ENCODE measurements at regions of chr6 and their contacts with region 1.

Region 1: DNA sequence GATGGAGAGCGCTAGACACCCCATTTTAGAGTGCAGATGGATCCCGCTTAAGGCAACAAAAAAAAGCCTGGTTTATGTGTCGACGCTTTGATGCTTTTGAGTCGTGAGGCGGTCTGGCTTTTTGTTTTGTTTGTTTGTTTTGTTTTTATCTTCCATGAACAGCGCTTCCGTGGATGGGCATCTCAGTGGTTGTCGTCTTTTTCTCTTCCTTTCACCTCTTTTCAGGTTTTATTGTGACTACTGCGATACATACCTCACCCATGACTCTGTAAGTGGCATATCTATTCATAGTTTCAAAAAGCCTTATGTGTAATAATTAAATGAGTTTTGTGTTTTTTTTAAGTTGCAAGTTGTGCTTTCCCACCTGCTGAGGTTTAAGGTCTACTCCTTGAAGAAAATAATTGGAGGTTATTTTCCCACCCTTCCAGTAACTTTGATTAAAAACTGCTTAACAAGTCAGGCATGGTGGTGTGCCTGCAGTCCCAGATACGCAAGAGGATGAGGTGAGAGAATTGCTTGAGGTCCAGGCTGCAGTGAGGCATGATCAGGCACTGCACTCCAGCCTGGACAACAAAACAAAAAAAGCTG is 476 bp downstream of the SNRPC start:
- DNase-seq: no peak
- ATAC-seq: no peak
- H3K4me3 Mint-ChIP-seq: no peak overlapping the region
- H3K27ac Mint-ChIP-seq: no peak overlapping the region
- H3K4me1 Mint-ChIP-seq: peaks cover 16% of the 10 kb centered on the region
- H3K27me3 Mint-ChIP-seq: no peaks in the 10 kb centered on the region
- CTCF ChIP-seq: no peak

Region 2: GRCh38 chr6:34236131-34236996 is 521.4 kb before region 1 on chr6 and contains the start of gene HMGA1:
- CTCF ChIA-PET with region 1: no interaction called
- POLR2A ChIA-PET with region 1: interaction called, 3 read pairs
- intact Hi-C with region 1: loop called (anchors 2 kb)
- DNase-seq: peak; percentile 90
- ATAC-seq: peak; percentile 77
- H3K4me3 Mint-ChIP-seq: peak within 1 kb of the TSS; percentile 89
- H3K27ac Mint-ChIP-seq: peak within 1 kb of the TSS; percentile 95
- H3K4me1 Mint-ChIP-seq: peaks cover 36% of the 10 kb centered on the region
- H3K27me3 Mint-ChIP-seq: no peaks in the 10 kb centered on the region
- CTCF ChIP-seq: no peak
- total RNA-seq, gene HMGA1: 186 and 188 TPM in 2 replicates

Region 3: DNA sequence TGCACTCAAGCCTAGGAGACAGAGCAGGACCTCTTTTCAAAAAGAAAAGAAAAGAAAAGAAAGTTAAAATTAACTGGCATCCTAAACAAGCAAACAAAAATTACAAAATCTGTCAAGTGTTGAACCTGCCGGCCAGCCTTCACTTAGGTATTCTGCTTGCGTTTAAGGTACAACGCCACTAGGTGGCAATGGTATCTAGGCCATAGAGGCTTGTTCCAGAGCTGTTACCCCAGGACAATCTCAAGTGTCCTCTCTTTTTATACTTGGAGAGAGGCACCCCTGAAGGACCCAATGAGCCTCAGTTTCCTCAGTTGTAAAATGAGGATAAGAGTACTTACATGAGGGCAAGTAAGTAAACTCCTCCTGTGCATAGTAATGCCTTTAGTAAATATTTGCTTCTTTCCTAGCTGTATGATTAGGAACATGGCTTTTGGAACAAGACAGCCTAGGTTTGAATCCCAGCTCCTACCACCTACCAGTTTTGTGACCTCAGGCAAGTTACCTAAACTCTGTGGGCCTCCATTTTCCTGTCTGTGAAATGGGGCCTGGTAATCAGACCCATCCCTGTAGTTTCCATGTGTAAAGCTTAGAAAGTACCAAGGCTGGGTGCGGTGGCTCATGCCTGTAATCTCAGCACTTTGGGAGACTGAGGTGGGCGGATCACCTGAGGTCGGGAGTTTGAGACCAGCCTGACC is 297.7 kb before region 1 on chr6:
- CTCF ChIA-PET with region 1: interaction called, 3 read pairs
- POLR2A ChIA-PET with region 1: no interaction called
- intact Hi-C with region 1: loop called (anchors 10 kb)
- DNase-seq: no peak
- ATAC-seq: peak; percentile 93
- H3K4me3 Mint-ChIP-seq: no peak overlapping the region
- H3K27ac Mint-ChIP-seq: no peak overlapping the region
- H3K4me1 Mint-ChIP-seq: peaks cover 1% of the 10 kb centered on the region
- H3K27me3 Mint-ChIP-seq: peaks cover 12% of the 10 kb centered on the region
- CTCF ChIP-seq: peak; percentile 19

Region 4: GRCh38 chr6:34638834-34639736 is 118.7 kb before region 1 on chr6:
- CTCF ChIA-PET with region 1: interaction called, 4 read pairs
- POLR2A ChIA-PET with region 1: interaction called, 9 read pairs
- intact Hi-C with region 1: loop called (anchors 1 kb)
- DNase-seq: no peak
- ATAC-seq: peak; percentile 84
- H3K4me3 Mint-ChIP-seq: peak overlapping the region; percentile 72
- H3K27ac Mint-ChIP-seq: peak overlapping the region; percentile 86
- H3K4me1 Mint-ChIP-seq: peaks cover 38% of the 10 kb centered on the region
- H3K27me3 Mint-ChIP-seq: no peaks in the 10 kb centered on the region
- CTCF ChIP-seq: no peak

Region 5: GRCh38 chr6:34671801-34672656 is 85.8 kb before region 1 on chr6:
- CTCF ChIA-PET with region 1: interaction called, 4 read pairs
- POLR2A ChIA-PET with region 1: interaction called, 11 read pairs
- intact Hi-C with region 1: loop called (anchors 1 kb)
- DNase-seq: peak; percentile 49
- ATAC-seq: peak; percentile 94
- H3K4me3 Mint-ChIP-seq: peak overlapping the region; percentile 74
- H3K27ac Mint-ChIP-seq: peak overlapping the region; percentile 97
- H3K4me1 Mint-ChIP-seq: peaks cover 78% of the 10 kb centered on the region
- H3K27me3 Mint-ChIP-seq: no peaks in the 10 kb centered on the region
- CTCF ChIP-seq: no peak

Region 6: GRCh38 chr6:34791701-34792235 is 34.0 kb after region 1 on chr6 and contains the start of gene BLTP3A:
- CTCF ChIA-PET with region 1: interaction called, 4 read pairs
- POLR2A ChIA-PET with region 1: interaction called, 13 read pairs
- intact Hi-C with region 1: loop called (anchors 1 kb)
- DNase-seq: peak; percentile 78
- ATAC-seq: peak; percentile 93
- H3K4me3 Mint-ChIP-seq: peak within 1 kb of the TSS; percentile 96
- H3K27ac Mint-ChIP-seq: peak within 1 kb of the TSS; percentile 93
- H3K4me1 Mint-ChIP-seq: peaks cover 24% of the 10 kb centered on the region
- H3K27me3 Mint-ChIP-seq: no peaks in the 10 kb centered on the region
- CTCF ChIP-seq: no peak
- total RNA-seq, gene BLTP3A: 10.8 and 12.6 TPM in 2 replicates

Region 7: GRCh38 chr6:35485402-35485877 is 727.7 kb after region 1 on chr6:
- CTCF ChIA-PET with region 1: no interaction called
- POLR2A ChIA-PET with region 1: no interaction called
- intact Hi-C with region 1: no loop called
- DNase-seq: no peak
- ATAC-seq: no peak
- H3K4me3 Mint-ChIP-seq: no peak overlapping the region
- H3K27ac Mint-ChIP-seq: no peak overlapping the region
- H3K4me1 Mint-ChIP-seq: no peaks in the 10 kb centered on the region
- H3K27me3 Mint-ChIP-seq: peaks cover 2% of the 10 kb centered on the region
- CTCF ChIP-seq: no peak